Activated T-helper 1 cell treated with anti-CD3 and anti-CD28 coated beads, Interleukin-12 subunit alpha, Interleukin-12 subunit beta, Interleukin-2, Interleukin-4 antibody, amounts not matched to agents 30 ng/mL and 10 ng/mL and 1 ng/mL, durations not matched to agents 14 hours and 24 hours and 36 hours (primary cell): ENCODE measurements at regions of chr19 and their contacts with region 1.

Region 1: GRCh38 chr19:38929929-38930775 is at the start of gene SARS2:
- DNase-seq: peak; percentile 91
- H3K4me3 Mint-ChIP-seq: peak within 1 kb of the TSS; percentile 99
- H3K27ac Mint-ChIP-seq: peak within 1 kb of the TSS; percentile 97
- H3K4me1 Mint-ChIP-seq: peaks cover 28% of the 10 kb centered on the region
- H3K27me3 Mint-ChIP-seq: no peaks in the 10 kb centered on the region
- total RNA-seq, gene SARS2: 36.5 and 38.4 TPM in 2 replicates

Region 2: GRCh38 chr19:38402967-38403861 is 526.9 kb before region 1 on chr19 and contains the start of gene FAM98C:
- intact Hi-C with region 1: loop called (anchors 1 kb)
- DNase-seq: peak; percentile 98
- H3K4me3 Mint-ChIP-seq: peak within 1 kb of the TSS; percentile 89
- H3K27ac Mint-ChIP-seq: peak within 1 kb of the TSS; percentile 94
- H3K4me1 Mint-ChIP-seq: peaks cover 21% of the 10 kb centered on the region
- H3K27me3 Mint-ChIP-seq: no peaks in the 10 kb centered on the region
- total RNA-seq, gene FAM98C: 26.6 and 27.5 TPM in 2 replicates

Region 3: DNA sequence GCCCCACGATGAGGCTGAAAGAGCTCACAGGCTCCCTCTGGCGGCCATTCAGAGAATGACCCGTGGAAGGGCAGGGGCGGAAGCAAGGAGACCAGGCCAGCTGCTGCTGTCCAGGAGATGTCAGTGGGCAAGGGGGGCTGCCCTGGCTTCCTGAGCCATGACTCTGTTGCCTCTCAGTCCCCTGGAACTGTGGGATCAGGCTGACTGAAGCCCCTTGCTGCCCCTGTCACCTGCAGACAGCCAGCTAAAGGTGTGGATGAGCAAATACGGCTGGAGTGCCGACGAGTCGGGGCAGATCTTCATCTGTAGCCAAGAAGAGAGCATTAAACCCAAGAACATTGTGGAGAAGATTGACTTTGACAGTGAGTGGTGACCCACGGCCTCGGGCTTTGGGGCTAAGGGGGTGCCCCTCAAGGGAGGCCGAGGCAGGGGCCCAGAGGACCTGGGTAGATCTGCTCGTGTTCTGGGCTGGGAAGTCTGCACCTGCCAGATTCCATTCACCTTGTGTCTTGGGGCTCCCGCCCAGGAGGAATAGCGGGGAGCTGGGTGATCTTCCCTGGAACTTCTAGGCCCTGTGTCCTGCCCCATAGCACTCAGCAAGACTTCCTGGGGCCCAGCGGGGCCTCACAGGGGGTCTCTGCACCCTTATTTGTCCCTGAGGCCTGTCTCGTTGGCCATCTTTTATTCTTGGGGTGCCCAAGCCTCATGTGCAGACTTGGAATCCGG is 295.2 kb before region 1 on chr19:
- intact Hi-C with region 1: loop called (anchors 1 kb)
- DNase-seq: peak; percentile 68
- H3K4me3 Mint-ChIP-seq: peak overlapping the region; percentile 43
- H3K27ac Mint-ChIP-seq: peak overlapping the region; percentile 83
- H3K4me1 Mint-ChIP-seq: peaks cover 36% of the 10 kb centered on the region
- H3K27me3 Mint-ChIP-seq: no peaks in the 10 kb centered on the region

Region 4: GRCh38 chr19:38736413-38737280 is 193.5 kb before region 1 on chr19:
- intact Hi-C with region 1: loop called (anchors 2 kb)
- DNase-seq: peak; percentile 38
- H3K4me3 Mint-ChIP-seq: peak overlapping the region; percentile 61
- H3K27ac Mint-ChIP-seq: peak overlapping the region; percentile 48
- H3K4me1 Mint-ChIP-seq: peaks cover 45% of the 10 kb centered on the region
- H3K27me3 Mint-ChIP-seq: peaks cover 8% of the 10 kb centered on the region

Region 5: DNA sequence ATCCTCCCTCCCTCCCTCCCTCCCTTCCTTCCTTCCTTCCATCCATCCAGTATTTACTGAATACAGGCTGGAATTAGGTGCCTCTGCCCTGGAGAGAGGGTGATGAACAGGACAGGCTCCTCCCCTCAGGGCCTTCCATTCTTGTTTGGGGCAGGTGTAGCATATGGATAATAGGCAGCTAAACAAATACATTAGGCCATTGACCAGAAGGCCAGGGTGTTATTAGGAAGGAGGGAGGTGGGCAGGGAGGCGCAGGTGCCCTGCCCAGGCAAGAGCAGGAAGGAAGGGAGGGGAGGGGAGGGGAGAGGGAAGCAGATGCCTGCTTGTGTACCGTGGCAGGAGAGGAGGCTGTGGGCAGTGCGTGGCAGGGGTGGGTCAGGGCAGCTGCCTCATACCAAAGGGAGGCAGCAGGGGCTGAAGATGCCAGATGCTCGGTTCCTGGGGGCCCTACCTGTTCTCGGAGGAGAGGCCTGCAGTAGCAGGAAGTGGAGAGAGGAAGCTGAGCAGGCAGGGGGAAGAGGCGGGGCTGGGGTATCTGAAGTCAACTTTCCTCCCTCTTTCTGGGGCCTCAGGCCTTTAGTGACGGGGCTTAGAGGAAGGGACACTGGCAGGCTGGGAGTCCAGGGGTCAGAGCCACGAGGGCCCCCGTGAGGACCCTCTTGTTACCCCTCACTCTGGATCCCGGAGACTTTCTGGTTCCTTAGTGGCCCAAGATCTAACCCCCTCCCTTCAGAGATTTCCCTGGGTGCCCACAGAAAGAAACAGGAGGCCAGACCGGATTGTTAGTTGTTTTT is 52.2 kb before region 1 on chr19 and contains the start of gene RINL:
- intact Hi-C with region 1: loop called (anchors 1 kb)
- DNase-seq: peak; percentile 58
- H3K4me3 Mint-ChIP-seq: peak within 1 kb of the TSS; percentile 95
- H3K27ac Mint-ChIP-seq: peak within 1 kb of the TSS; percentile 96
- H3K4me1 Mint-ChIP-seq: peaks cover 32% of the 10 kb centered on the region
- H3K27me3 Mint-ChIP-seq: no peaks in the 10 kb centered on the region
- total RNA-seq, gene RINL: 70.7 and 73.1 TPM in 2 replicates

Region 6: DNA sequence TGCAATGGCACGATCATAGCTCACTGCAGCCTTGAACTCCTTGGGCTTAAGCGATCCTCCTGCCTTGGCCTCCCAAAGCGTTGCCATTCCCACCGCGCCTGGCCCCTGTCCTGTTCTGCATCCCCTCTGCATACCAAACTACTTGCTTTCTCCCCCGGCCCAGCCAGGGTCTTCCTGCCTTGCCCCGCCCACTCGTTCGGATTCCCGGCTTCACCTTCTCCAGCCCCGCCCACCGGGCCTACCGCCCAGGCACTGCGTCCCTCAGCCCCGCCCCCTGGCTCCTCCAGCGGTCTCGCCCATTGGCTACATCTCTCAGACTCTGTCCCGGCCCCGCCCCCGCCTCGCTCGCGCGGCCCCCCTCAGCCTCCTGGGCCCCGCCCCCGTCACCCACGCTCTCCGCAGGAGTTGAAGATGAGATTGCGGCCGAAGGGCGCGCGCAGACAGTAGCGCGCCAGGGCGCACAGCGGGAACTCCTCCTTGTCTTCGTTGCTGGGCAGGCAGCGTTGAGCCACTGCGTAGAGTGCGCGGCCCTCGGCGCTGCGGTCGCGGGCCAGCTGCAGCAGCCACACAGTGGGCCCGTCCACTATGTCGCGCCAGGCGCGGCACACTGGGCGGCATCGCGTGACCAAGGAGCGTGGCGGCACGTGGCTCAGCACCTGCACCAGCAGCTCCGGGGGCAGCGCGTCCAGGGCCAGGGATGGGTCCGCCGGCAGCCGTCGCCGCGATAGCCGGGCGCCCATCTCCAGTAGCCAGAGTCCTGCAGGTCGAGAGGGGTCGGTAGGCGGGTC is 19.6 kb after region 1 on chr19:
- intact Hi-C with region 1: loop called (anchors 1 kb)
- DNase-seq: peak; percentile 79
- H3K4me3 Mint-ChIP-seq: peak overlapping the region; percentile 59
- H3K27ac Mint-ChIP-seq: no peak overlapping the region
- H3K4me1 Mint-ChIP-seq: peaks cover 15% of the 10 kb centered on the region
- H3K27me3 Mint-ChIP-seq: peaks cover 21% of the 10 kb centered on the region